CD4-positive, alpha-beta T cell (primary cell): ENCODE measurements at regions of chr12 and their contacts with region 1.

Region 1: GRCh38 chr12:51047655-51048540 is at the start of gene LETMD1:
- DNase-seq: peak; percentile 79 to 98 (median 87)
- ATAC-seq: peak; percentile 95
- H3K4me3 ChIP-seq: peak within 1 kb of the TSS; percentile 91
- H3K4me3 Mint-ChIP-seq: peak within 1 kb of the TSS; percentile 93
- H3K27ac ChIP-seq: peak within 1 kb of the TSS; percentile 83 to 94
- H3K27ac Mint-ChIP-seq: peak within 1 kb of the TSS; percentile 93
- H3K4me1 ChIP-seq: peaks cover 25% of the 10 kb centered on the region
- H3K4me1 Mint-ChIP-seq: peaks cover 39% of the 10 kb centered on the region
- H3K27me3 ChIP-seq: no peaks in the 10 kb centered on the region
- H3K27me3 Mint-ChIP-seq: no peaks in the 10 kb centered on the region
- CTCF ChIP-seq: peak; percentile 94
- total RNA-seq, gene LETMD1: 51.8 to 54.1 TPM

Region 2: DNA sequence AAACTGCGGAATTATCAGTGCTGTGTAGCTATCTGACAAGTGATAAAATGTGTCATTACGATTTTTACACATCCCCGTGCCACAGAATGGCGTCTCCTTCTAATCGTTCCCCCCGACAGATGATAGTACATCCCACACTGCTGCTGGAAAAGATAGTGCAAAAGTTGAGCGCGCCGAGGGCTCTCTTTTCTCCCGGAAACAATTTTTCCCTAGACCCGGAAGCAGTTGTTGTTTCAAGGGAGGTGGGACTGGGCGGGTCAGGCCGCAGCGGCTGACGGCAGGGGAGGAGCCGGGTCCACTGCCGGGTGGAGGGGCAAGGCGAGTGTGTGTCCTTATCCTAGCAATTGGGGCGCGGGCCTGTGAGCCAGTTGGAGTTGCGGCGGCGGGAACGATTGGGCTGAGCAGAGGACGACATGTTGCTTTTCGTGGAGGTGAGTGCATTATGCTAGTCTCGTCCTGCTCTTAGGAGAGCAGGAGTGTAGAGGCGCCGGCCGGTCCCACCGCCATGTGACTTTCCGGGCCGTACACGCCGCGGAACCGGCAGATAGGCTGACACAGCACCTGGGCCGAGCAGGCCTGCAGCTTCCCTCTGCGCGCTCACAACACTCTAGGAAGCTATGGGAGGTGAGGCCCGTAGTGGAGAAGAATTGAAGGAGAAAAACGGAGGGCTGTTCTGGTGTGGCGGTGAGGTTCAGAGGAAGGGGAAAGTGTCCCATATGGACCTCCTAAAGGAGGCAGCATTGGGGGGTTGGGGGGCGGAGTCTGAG is 647.1 kb before region 1 on chr12 and contains the start of gene LARP4:
- CTCF ChIA-PET with region 1: no interaction called
- POLR2A ChIA-PET with region 1: no interaction called
- intact Hi-C with region 1: loop called in 1 of 2 experiments (anchors 5 kb)
- DNase-seq: peak; percentile 79 to 94 (median 85)
- ATAC-seq: peak; percentile 94
- H3K4me3 ChIP-seq: peak within 1 kb of the TSS; percentile 91
- H3K4me3 Mint-ChIP-seq: peak within 1 kb of the TSS; percentile 94
- H3K27ac ChIP-seq: peak within 1 kb of the TSS; percentile 65 to 70
- H3K27ac Mint-ChIP-seq: peak within 1 kb of the TSS; percentile 80
- H3K4me1 ChIP-seq: peaks cover 15% of the 10 kb centered on the region
- H3K4me1 Mint-ChIP-seq: peaks cover 30% of the 10 kb centered on the region
- H3K27me3 ChIP-seq: no peaks in the 10 kb centered on the region
- H3K27me3 Mint-ChIP-seq: peaks cover 11% of the 10 kb centered on the region
- CTCF ChIP-seq: peak; percentile 10
- total RNA-seq, gene LARP4: 17.6 to 18.1 TPM

Region 3: GRCh38 chr12:51025836-51026638 is 21.9 kb before region 1 on chr12 and contains the start of gene SLC11A2:
- CTCF ChIA-PET with region 1: no interaction called
- POLR2A ChIA-PET with region 1: interaction called, 12 read pairs
- intact Hi-C with region 1: loop called (anchors 1 kb)
- DNase-seq: peak; percentile 80 to 96 (median 88)
- ATAC-seq: peak; percentile 86
- H3K4me3 ChIP-seq: peak within 1 kb of the TSS; percentile 83
- H3K4me3 Mint-ChIP-seq: peak within 1 kb of the TSS; percentile 97
- H3K27ac ChIP-seq: peak within 1 kb of the TSS; percentile 78 to 83
- H3K27ac Mint-ChIP-seq: peak within 1 kb of the TSS; percentile 92
- H3K4me1 ChIP-seq: peaks cover 57% of the 10 kb centered on the region
- H3K4me1 Mint-ChIP-seq: peaks cover 63% of the 10 kb centered on the region
- H3K27me3 ChIP-seq: no peaks in the 10 kb centered on the region
- H3K27me3 Mint-ChIP-seq: no peaks in the 10 kb centered on the region
- CTCF ChIP-seq: no peak
- total RNA-seq, gene SLC11A2: 43.6 to 47.7 TPM

Region 4: DNA sequence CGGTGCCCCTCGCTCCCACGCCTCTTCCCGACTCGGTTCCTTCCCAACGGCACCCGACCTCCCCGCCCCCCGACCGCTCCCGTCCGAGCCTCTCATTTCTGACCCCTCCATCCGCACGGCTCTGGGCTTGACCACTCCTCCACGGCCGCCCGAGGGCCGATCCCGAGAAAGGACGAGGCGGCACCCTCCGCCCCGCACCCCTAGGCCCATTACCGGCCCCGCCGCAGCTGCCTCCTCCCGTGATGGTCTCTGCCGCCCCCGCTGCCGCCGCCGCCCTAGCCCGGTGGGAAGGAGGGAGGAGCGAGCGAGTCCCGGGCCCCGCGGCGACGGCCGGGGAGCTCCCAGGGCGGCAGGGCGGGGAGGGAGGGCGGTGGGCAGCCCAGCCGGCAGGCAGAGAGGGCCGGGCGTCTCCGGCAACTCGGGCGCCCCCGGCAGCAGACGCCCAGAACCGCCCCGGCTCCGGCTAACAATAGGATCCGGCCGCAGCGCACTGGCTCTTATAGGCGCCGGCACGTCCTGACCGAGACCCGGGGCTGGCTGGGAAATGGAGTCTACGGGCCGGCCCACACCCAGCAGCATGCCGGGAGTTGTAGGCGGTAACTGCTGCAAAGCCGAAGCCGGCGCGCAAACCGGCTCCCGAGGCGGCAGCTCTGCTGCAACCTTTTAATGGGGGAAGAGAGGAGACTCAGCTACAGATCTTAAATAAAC is 35.4 kb after region 1 on chr12 and contains the start of gene CSRNP2:
- CTCF ChIA-PET with region 1: interaction called, 3 read pairs
- POLR2A ChIA-PET with region 1: interaction called, 8 read pairs
- intact Hi-C with region 1: loop called (anchors 1 kb)
- DNase-seq: peak; percentile 92 to 97 (median 94)
- ATAC-seq: peak; percentile 99
- H3K4me3 ChIP-seq: peak within 1 kb of the TSS; percentile 84
- H3K4me3 Mint-ChIP-seq: peak within 1 kb of the TSS; percentile 95
- H3K27ac ChIP-seq: peak within 1 kb of the TSS; percentile 40 to 71
- H3K27ac Mint-ChIP-seq: peak within 1 kb of the TSS; percentile 87
- H3K4me1 ChIP-seq: peaks cover 20% of the 10 kb centered on the region
- H3K4me1 Mint-ChIP-seq: peaks cover 41% of the 10 kb centered on the region
- H3K27me3 ChIP-seq: no peaks in the 10 kb centered on the region
- H3K27me3 Mint-ChIP-seq: no peaks in the 10 kb centered on the region
- CTCF ChIP-seq: peak; percentile 34
- total RNA-seq, gene CSRNP2: 14.4 to 16.5 TPM

Region 5: DNA sequence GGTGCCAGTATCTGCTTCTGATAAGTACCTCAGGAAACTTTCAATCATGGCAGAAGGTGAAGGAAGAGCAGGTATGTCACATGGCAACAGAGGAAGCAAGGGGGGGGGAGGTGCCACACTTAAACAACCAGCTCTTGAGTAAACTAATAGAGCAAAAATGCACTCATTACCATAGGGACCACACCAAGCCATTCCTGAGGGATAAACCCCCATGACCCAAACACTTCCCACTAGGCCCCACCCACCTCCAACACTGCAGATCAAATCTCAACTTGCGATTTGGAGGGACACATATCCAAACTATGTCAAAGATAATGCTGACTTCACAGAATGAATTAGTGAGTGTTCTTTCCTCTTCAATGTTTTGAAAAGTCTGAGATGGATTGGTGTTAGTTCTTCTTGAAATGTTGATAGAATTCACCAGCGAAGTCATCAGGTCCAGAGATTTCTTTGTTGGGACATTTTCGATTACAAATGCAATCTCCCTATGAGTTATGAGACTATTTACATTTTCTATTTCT is 108.4 kb after region 1 on chr12:
- CTCF ChIA-PET with region 1: no interaction called
- POLR2A ChIA-PET with region 1: no interaction called
- intact Hi-C with region 1: no loop called
- DNase-seq: no peak
- ATAC-seq: no peak
- H3K4me3 ChIP-seq: no peak overlapping the region
- H3K4me3 Mint-ChIP-seq: no peak overlapping the region
- H3K27ac ChIP-seq: no peak overlapping the region
- H3K27ac Mint-ChIP-seq: no peak overlapping the region
- H3K4me1 ChIP-seq: no peaks in the 10 kb centered on the region
- H3K4me1 Mint-ChIP-seq: peaks cover 29% of the 10 kb centered on the region
- H3K27me3 ChIP-seq: no peaks in the 10 kb centered on the region
- H3K27me3 Mint-ChIP-seq: no peaks in the 10 kb centered on the region
- CTCF ChIP-seq: no peak

Region 6: DNA sequence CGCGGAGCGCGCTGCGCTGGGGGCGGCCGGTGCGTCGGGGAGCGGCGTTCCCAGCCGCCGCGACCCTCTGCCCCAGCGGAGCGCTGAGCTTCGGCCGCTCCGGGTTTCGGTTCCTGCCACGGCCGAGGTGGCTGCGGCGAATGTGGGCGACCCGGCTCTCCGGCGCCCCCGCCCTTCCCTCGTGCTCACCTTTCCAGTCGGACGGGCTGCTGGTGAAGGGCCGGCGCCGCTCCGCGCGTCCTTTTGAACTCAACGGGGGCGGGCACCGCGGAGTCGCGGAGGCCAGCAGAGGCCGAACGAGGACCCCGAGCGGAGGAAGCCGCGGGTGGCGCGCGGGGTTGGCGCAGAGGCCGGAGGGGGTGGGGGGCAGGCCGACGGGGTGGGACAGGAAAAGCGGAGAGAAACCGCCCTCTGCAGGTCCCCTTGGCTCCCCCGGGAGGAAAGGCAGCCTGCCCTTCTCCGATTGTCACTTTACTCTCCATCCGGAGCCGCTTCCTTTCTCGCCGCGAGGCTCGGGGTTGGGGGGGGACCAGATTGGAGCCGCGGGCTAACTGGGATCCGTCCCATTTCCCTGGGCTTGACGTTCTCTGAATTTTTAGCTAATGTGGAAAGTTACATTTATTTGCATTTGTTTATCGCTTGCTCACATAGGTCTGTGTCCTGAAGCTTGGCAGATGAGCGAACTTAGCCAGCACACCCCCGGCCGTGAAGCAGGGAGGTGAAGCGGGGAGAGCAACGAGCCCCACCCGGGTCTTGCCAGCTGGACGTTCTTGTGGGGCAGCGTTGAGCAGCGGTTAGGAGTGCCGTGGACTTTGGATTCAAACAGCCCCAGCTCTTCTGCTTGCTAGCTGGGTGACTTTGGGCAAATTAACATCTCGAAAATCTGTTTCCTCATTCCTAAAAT is 222.4 kb after region 1 on chr12 and contains the start of gene SMAGP:
- CTCF ChIA-PET with region 1: no interaction called
- POLR2A ChIA-PET with region 1: no interaction called
- intact Hi-C with region 1: loop called in 1 of 2 experiments (anchors 5 kb)
- DNase-seq: peak in 13 of 14 experiments; percentile 14 to 70 (median 28)
- ATAC-seq: peak; percentile 44
- H3K4me3 ChIP-seq: peak within 1 kb of the TSS; percentile 72
- H3K4me3 Mint-ChIP-seq: peak within 1 kb of the TSS; percentile 95
- H3K27ac ChIP-seq: peak within 1 kb of the TSS in 1 of 2 donors; percentile 36
- H3K27ac Mint-ChIP-seq: peak within 1 kb of the TSS; percentile 71
- H3K4me1 ChIP-seq: peaks cover 21% of the 10 kb centered on the region
- H3K4me1 Mint-ChIP-seq: peaks cover 32% of the 10 kb centered on the region
- H3K27me3 ChIP-seq: no peaks in the 10 kb centered on the region
- H3K27me3 Mint-ChIP-seq: no peaks in the 10 kb centered on the region
- CTCF ChIP-seq: no peak
- total RNA-seq, gene SMAGP: 2.5 to 3.0 TPM